Activated B cell treated with CpG ODN at 0.5 μM for 24 hours (primary cell): ENCODE measurements at regions of chr14 and their contacts with region 1.

Region 1: DNA sequence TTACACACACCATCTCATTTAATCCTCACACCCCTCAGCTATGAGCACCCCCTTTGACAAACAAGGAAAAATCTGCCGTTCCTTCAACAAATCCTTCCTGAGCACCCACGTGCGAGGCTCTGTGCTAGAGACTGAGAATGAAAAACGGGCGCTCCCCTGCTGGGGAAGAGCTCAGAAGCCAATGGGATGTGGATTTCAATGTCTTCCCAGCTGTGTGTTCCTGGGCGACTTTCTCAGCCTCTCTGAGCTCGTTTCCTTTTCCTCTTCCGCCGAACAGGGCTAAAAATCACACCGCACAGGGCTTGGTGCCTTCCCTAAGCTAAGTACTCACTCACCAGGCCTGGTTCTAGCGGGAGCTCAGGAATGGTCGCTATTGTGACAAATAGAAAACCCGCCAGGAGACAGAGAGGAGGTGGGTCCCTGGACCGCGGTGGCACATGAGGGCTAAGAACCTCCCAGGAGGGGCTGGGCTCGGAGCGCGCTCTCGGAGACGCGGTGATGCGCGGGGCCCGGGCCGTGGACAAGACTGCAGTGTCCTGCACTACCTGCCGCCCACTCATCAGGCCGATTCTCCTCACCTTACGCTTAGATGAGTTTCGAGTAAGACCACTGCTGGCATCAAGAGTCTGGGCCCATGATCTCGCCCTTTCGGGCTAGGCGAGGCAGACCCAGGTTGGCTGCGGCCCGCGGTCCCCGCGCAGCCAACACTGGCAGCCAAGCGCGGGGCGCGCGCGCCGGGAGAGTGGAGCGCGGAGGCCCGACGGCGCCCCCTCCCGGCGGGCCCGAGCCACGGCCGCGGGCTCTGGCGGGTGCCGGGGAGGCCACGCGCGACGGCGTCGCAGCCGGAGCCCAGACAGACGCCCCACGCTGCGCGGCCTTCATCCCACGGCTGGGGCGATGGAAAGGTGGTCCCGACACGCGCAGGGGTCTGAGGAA is 17.0 kb downstream of the ZDHHC22 start:
- DNase-seq: peak; percentile 80
- ATAC-seq: peak; percentile 35
- H3K4me3 Mint-ChIP-seq: peak overlapping the region; percentile 85
- H3K27ac Mint-ChIP-seq: peak overlapping the region; percentile 98
- H3K4me1 Mint-ChIP-seq: peaks cover 61% of the 10 kb centered on the region
- H3K27me3 Mint-ChIP-seq: peaks cover 5% of the 10 kb centered on the region
- CTCF ChIP-seq: no peak

Region 2: GRCh38 chr14:75514673-75515628 is 1609.7 kb before region 1 on chr14:
- CTCF ChIA-PET with region 1: no interaction called
- POLR2A ChIA-PET with region 1: no interaction called
- intact Hi-C with region 1: loop called (anchors 10 kb)
- DNase-seq: peak; percentile 61
- ATAC-seq: peak; percentile 56
- H3K4me3 Mint-ChIP-seq: peak overlapping the region; percentile 87
- H3K27ac Mint-ChIP-seq: peak overlapping the region; percentile 99
- H3K4me1 Mint-ChIP-seq: peaks cover 69% of the 10 kb centered on the region
- H3K27me3 Mint-ChIP-seq: no peaks in the 10 kb centered on the region
- CTCF ChIP-seq: no peak

Region 3: DNA sequence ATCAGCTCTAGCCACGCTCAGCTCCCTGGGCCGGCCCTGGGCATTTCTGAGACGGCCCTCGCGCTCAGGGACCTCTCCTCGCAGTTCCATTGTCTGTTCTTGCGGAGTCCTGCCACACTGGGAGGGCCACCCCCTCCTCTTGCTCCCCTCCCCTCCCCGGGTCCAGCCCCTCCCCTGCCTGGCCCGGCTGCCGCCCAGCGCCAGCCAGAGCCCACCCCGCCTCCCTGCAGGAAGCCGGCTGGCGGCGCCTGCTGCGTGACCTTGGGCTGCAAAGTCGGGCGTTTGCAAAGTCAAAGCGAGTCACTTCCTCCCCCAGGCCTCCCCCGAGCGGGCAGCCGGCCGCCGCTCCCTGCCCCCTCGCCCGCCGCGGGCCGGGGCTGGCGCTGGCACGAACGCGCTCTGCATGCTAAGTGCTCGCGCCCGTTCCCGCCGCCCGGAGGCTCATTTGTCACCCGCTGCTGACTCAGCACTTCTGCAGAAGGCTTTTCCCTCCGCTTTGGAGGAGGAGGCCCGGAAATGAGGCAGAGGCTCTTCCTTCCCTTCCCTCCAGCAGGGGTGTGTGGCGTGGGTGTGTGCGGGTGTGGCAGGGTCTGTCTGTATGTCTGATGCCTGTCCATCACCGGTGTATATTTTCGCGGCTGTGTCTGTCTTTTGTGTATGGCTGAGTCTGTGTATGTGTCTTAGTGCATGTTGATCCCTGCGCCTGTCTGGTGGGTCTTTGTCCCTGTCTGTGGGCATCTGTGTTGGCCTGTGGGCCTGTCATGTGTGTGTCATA is 168.1 kb before region 1 on chr14:
- CTCF ChIA-PET with region 1: interaction called, 4 read pairs
- POLR2A ChIA-PET with region 1: interaction called, 21 read pairs
- intact Hi-C with region 1: loop called (anchors 1 kb)
- DNase-seq: peak; percentile 75
- ATAC-seq: peak; percentile 68
- H3K4me3 Mint-ChIP-seq: peak overlapping the region; percentile 86
- H3K27ac Mint-ChIP-seq: peak overlapping the region; percentile 94
- H3K4me1 Mint-ChIP-seq: peaks cover 75% of the 10 kb centered on the region
- H3K27me3 Mint-ChIP-seq: no peaks in the 10 kb centered on the region
- CTCF ChIP-seq: no peak

Region 4: GRCh38 chr14:77067632-77068514 is 56.7 kb before region 1 on chr14:
- CTCF ChIA-PET with region 1: interaction called, 41 read pairs
- POLR2A ChIA-PET with region 1: interaction called, 12 read pairs
- intact Hi-C with region 1: loop called (anchors 1 kb)
- DNase-seq: peak; percentile 48
- ATAC-seq: peak; percentile 66
- H3K4me3 Mint-ChIP-seq: no peak overlapping the region
- H3K27ac Mint-ChIP-seq: no peak overlapping the region
- H3K4me1 Mint-ChIP-seq: peaks cover 28% of the 10 kb centered on the region
- H3K27me3 Mint-ChIP-seq: peaks cover 3% of the 10 kb centered on the region
- CTCF ChIP-seq: no peak

Region 5: DNA sequence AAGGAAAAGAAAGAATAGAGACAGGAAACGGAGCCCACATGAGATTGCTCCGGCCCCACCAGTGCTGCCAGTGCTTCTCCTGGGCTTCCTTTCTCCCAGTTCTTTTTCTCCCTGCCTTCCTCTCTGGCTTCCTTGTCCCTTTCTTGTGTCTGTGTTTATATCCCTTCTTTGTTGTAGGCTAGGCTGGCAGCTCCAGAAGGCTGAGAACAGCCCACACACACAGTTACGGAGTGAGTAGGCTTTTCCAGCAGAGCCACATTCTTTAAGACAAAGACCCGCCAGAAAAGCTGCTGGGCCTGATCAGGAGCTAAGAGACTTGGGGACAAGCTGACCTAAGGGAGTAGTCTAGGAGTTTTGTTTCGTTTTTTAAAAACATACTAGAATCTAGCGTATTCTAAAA is 13.6 kb before region 1 on chr14:
- CTCF ChIA-PET with region 1: interaction called, 151 read pairs
- POLR2A ChIA-PET with region 1: interaction called, 28 read pairs
- intact Hi-C with region 1: loop called (anchors 1 kb)
- DNase-seq: no peak
- ATAC-seq: no peak
- H3K4me3 Mint-ChIP-seq: no peak overlapping the region
- H3K27ac Mint-ChIP-seq: no peak overlapping the region
- H3K4me1 Mint-ChIP-seq: peaks cover 26% of the 10 kb centered on the region
- H3K27me3 Mint-ChIP-seq: no peaks in the 10 kb centered on the region
- CTCF ChIP-seq: no peak

Region 6: GRCh38 chr14:77593501-77593961 is 468.9 kb after region 1 on chr14:
- CTCF ChIA-PET with region 1: no interaction called
- POLR2A ChIA-PET with region 1: interaction called, 3 read pairs
- intact Hi-C with region 1: loop called (anchors 1 kb)
- DNase-seq: no peak
- ATAC-seq: peak; percentile 72
- H3K4me3 Mint-ChIP-seq: peak overlapping the region; percentile 78
- H3K27ac Mint-ChIP-seq: peak overlapping the region; percentile 95
- H3K4me1 Mint-ChIP-seq: peaks cover 90% of the 10 kb centered on the region
- H3K27me3 Mint-ChIP-seq: no peaks in the 10 kb centered on the region
- CTCF ChIP-seq: no peak